Activated CD4-positive, alpha-beta memory T cell treated with anti-CD3 and anti-CD28 coated beads for 36 hours (primary cell): ENCODE measurements at regions of chr7 and their contacts with region 1.

Region 1: GRCh38 chr7:25968205-25968993 is 183.6 kb upstream of the NFE2L3 start:
- DNase-seq: peak; percentile 87
- H3K4me3 Mint-ChIP-seq: peak overlapping the region; percentile 7
- H3K27ac Mint-ChIP-seq: peak overlapping the region; percentile 55
- H3K4me1 Mint-ChIP-seq: peaks cover 23% of the 10 kb centered on the region
- H3K27me3 Mint-ChIP-seq: peaks cover 31% of the 10 kb centered on the region

Region 2: GRCh38 chr7:25803117-25803887 is 165.1 kb before region 1 on chr7:
- CTCF ChIA-PET with region 1: no interaction called
- POLR2A ChIA-PET with region 1: no interaction called
- intact Hi-C with region 1: loop called (anchors 2 kb)
- DNase-seq: peak; percentile 34
- H3K4me3 Mint-ChIP-seq: no peak overlapping the region
- H3K27ac Mint-ChIP-seq: no peak overlapping the region
- H3K4me1 Mint-ChIP-seq: peaks cover 21% of the 10 kb centered on the region
- H3K27me3 Mint-ChIP-seq: peaks cover 7% of the 10 kb centered on the region

Region 3: GRCh38 chr7:25951031-25951948 is 17.1 kb before region 1 on chr7:
- CTCF ChIA-PET with region 1: interaction called, 4 read pairs
- POLR2A ChIA-PET with region 1: interaction called, 3 read pairs
- intact Hi-C with region 1: loop called (anchors 1 kb)
- DNase-seq: peak; percentile 91
- H3K4me3 Mint-ChIP-seq: peak overlapping the region; percentile 75
- H3K27ac Mint-ChIP-seq: peak overlapping the region; percentile 56
- H3K4me1 Mint-ChIP-seq: peaks cover 11% of the 10 kb centered on the region
- H3K27me3 Mint-ChIP-seq: peaks cover 4% of the 10 kb centered on the region

Region 4: DNA sequence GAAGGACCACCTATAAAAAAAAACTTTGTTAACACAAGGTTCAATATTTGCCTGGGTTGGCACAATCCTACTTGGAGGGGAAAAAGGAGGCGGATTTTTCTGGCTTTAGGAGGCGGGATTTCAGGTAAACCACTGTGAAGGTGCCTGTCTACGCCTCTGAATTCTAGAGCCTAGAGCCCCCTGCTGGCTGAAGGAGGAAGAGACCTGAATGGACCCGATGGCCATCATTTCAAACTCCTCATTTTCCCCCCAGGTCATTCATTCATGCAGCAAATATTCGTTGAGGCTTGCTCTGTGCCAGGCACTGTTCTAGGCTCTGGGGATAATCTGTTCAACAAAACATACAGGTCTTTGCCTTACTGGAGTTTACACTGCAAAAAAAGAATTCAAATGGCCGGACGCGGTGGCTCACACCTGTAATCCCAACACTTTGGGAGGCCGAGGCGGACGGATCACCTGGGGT is 93.3 kb after region 1 on chr7:
- CTCF ChIA-PET with region 1: no interaction called
- POLR2A ChIA-PET with region 1: no interaction called
- intact Hi-C with region 1: loop called (anchors 5 kb)
- DNase-seq: peak; percentile 82
- H3K4me3 Mint-ChIP-seq: no peak overlapping the region
- H3K27ac Mint-ChIP-seq: no peak overlapping the region
- H3K4me1 Mint-ChIP-seq: peaks cover 5% of the 10 kb centered on the region
- H3K27me3 Mint-ChIP-seq: peaks cover 16% of the 10 kb centered on the region

Region 5: GRCh38 chr7:26167301-26167934 is 199.0 kb after region 1 on chr7:
- CTCF ChIA-PET with region 1: no interaction called
- POLR2A ChIA-PET with region 1: interaction called, 5 read pairs
- intact Hi-C with region 1: loop called (anchors 1 kb)
- DNase-seq: peak; percentile 65
- H3K4me3 Mint-ChIP-seq: peak overlapping the region; percentile 11
- H3K27ac Mint-ChIP-seq: peak overlapping the region; percentile 94
- H3K4me1 Mint-ChIP-seq: peaks cover 48% of the 10 kb centered on the region
- H3K27me3 Mint-ChIP-seq: no peaks in the 10 kb centered on the region